Panc1 (cell line): ENCODE measurements at regions of chr3 and their contacts with region 1.

Region 1: GRCh38 chr3:151156618-151157216 is 46.3 kb downstream of the GPR171 start:
- DNase-seq: peak; percentile 36
- ATAC-seq: peak; percentile 77; the same call in 1 of the 2 replicates
- H3K4me3 ChIP-seq: no peak overlapping the region
- H3K27ac ChIP-seq: no peak overlapping the region
- H3K4me1 ChIP-seq: no peaks in the 10 kb centered on the region
- H3K27me3 ChIP-seq: no peaks in the 10 kb centered on the region
- CTCF ChIP-seq: peak; percentile 84

Region 2: DNA sequence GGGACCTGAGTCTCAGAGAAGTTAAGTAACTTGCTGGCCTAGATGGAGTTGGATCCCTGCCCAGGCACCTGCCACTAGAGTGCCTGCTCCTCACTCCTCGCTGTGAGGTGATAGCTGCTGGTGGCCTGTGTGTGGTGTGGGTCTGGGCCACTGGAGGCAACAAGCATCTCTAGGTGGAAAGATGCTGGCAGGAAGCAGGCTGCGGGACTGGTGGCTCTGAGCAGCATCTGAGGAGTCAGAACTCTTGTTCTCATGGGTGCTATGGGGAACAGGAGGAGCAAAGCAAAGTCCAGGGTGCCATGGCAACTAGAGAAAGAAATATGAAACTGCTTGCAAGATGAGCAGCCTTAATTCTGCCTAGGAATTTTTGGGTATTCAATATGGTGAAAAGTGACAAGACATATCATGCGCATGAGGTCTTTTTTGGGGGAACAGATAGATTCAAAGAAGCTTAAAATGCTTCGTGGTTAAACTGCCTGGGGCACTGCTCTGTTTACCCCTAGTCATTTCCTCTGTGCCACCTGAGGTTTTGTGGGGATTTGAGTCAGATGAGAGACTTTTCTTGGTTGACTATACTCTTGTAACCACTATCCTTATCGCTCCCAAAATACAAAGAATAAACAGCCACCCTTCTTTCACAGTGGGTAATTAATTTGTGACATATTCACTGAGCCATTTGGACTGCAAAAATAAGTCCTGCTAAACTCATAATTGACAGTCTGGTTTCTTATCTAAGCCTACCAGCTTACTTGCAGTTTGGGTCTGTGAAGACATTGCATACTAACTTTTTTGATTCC is 21.0 kb before region 1 on chr3:
- CTCF ChIA-PET with region 1: interaction called, 11 read pairs
- POLR2A ChIA-PET with region 1: no interaction called
- in situ Hi-C with region 1: no loop called
- intact Hi-C with region 1: no loop called
- DNase-seq: no peak
- ATAC-seq: no peak; the same call in 1 of the 2 replicates
- H3K4me3 ChIP-seq: no peak overlapping the region
- H3K27ac ChIP-seq: no peak overlapping the region
- H3K4me1 ChIP-seq: no peaks in the 10 kb centered on the region
- H3K27me3 ChIP-seq: peaks cover 5% of the 10 kb centered on the region; the same call in 1 of the 2 replicates
- CTCF ChIP-seq: no peak